Panc1 (cell line): ENCODE measurements at regions of chr15 and their contacts with region 1.

Region 1: GRCh38 chr15:96416934-96417759 is 86.6 kb downstream of the NR2F2 start:
- DNase-seq: no peak
- ATAC-seq: peak; percentile 52; the same call in 1 of the 2 replicates
- H3K4me3 ChIP-seq: peak overlapping the region in 1 of 2 experiments; percentile 15; a peak in 1 of 4 replicates
- H3K27ac ChIP-seq: no peak overlapping the region
- H3K4me1 ChIP-seq: no peaks in the 10 kb centered on the region
- H3K27me3 ChIP-seq: peaks cover 39% of the 10 kb centered on the region
- CTCF ChIP-seq: no peak

Region 2: DNA sequence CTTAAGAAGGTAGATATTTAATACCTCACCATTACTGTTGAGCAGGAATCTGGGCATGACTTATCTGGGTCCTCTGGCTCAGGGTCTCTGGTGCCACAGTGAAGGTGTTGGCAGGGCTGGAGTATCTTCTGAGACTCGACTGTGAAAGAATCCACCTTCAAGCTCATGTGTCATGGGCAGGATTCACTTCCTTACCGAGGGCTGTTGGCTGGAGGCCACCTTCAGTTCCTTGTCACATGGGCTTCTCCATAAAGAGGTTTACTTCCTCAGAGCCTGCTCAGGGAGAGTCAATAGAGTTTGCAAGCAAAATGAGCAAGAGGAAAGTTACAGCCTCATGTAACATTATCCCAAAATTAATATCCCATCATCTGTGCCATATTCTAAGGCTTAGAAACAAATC is 372.9 kb after region 1 on chr15:
- CTCF ChIA-PET with region 1: no interaction called
- POLR2A ChIA-PET with region 1: no interaction called
- in situ Hi-C with region 1: no loop called
- intact Hi-C with region 1: no loop called
- DNase-seq: no peak
- ATAC-seq: no peak
- H3K4me3 ChIP-seq: no peak overlapping the region
- H3K27ac ChIP-seq: no peak overlapping the region
- H3K4me1 ChIP-seq: no peaks in the 10 kb centered on the region
- H3K27me3 ChIP-seq: no peaks in the 10 kb centered on the region; the same call in 1 of the 2 replicates
- CTCF ChIP-seq: no peak

Region 3: DNA sequence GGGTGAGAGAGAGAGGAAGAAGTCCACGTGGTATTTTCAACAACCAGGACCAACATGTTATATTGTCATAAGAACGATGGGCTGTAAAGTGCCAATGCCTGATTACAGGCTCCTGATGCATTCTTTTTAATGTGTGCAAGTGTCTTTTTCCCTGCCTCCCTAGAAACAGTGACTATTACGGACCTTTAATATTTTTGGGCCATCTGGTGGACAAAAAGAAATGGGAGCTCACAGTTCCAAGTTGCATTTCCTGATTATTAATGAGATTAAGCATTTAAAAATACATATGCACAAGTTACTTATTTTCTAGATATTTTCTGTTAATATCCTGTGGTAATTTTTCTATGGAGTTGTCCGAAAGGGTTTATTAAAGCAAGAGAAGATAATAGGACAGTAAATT is 443.6 kb after region 1 on chr15:
- CTCF ChIA-PET with region 1: no interaction called
- POLR2A ChIA-PET with region 1: interaction called, 10 read pairs
- in situ Hi-C with region 1: no loop called
- intact Hi-C with region 1: no loop called
- DNase-seq: no peak
- ATAC-seq: no peak
- H3K4me3 ChIP-seq: no peak overlapping the region
- H3K27ac ChIP-seq: no peak overlapping the region
- H3K4me1 ChIP-seq: no peaks in the 10 kb centered on the region
- H3K27me3 ChIP-seq: no peaks in the 10 kb centered on the region
- CTCF ChIP-seq: no peak; the same call in 1 of the 2 replicates